A673 (cell line): ENCODE measurements at regions of chr7 and their contacts with region 1.

Region 1: DNA sequence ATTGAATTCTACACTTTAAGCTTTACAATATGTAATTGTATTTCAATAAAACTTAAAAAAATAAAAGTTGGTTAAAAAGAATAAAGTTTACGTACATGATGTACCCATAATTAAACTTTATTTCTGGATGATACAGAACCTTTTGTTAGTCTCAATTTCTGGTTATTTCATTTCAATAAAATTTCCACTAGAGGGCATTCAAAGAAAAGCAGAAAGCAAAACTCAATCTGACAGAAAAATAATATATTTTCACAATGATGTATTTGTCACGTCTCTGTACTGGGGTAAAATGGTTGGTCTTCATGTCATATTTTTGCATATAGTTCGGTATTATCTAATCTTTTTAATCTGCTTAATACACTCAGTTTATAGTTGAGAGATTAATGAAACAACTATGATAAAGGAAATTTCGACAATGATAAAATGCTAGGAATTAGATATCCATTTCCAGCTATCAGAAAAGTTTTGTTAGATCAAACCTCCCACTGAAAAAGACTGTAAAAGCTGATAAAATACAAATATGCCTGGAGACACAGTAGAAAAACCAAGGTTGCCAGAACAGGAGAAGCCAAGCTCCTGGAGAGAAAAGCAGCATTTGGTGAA is 27.4 kb downstream of the ASZ1 start:
- DNase-seq: peak; percentile 19
- H3K4me3 ChIP-seq: no peak overlapping the region
- H3K27ac ChIP-seq: no peak overlapping the region
- H3K4me1 ChIP-seq: no peaks in the 10 kb centered on the region
- H3K27me3 ChIP-seq: no peaks in the 10 kb centered on the region
- CTCF ChIP-seq: peak; percentile 68

Region 2: GRCh38 chr7:117210397-117210796 is 189.5 kb before region 1 on chr7:
- CTCF ChIA-PET with region 1: no interaction called
- POLR2A ChIA-PET with region 1: no interaction called
- intact Hi-C with region 1: no loop called
- DNase-seq: no peak
- H3K4me3 ChIP-seq: no peak overlapping the region
- H3K27ac ChIP-seq: no peak overlapping the region
- H3K4me1 ChIP-seq: peaks cover 7% of the 10 kb centered on the region
- H3K27me3 ChIP-seq: no peaks in the 10 kb centered on the region
- CTCF ChIP-seq: no peak

Region 3: GRCh38 chr7:117673839-117674238 is 273.9 kb after region 1 on chr7:
- CTCF ChIA-PET with region 1: no interaction called
- POLR2A ChIA-PET with region 1: no interaction called
- intact Hi-C with region 1: loop called (anchors 5 kb)
- DNase-seq: peak; percentile 56
- H3K4me3 ChIP-seq: no peak overlapping the region
- H3K27ac ChIP-seq: no peak overlapping the region
- H3K4me1 ChIP-seq: no peaks in the 10 kb centered on the region
- H3K27me3 ChIP-seq: no peaks in the 10 kb centered on the region
- CTCF ChIP-seq: peak; percentile 64

Region 4: DNA sequence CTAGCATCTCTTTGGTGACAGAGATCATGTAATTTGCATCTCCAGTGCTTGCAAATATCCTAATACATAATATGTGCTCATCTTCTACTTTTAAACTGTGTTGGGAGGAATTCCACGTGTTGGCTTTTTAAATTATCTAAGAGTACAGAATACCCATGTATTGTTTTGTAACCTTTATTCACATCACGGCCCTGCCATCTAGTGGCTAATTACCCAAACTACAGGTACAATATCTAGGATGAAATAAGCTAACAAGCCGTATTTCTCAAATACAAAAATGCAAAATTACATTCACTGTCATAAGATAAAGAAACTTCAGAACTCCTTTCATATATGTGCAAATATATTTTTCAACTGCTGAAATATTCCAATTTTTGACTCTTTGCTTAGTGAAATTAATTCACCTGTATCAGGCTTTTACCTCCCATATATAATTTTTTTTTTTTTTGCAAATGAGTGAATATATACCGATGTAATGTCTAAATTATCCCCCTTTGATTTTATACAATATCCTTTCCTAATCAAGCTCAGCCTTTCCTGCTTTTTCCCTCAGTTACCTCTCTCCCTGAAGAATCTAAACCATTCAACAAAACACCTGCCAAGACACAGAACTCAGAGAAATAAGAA is 753.7 kb after region 1 on chr7:
- CTCF ChIA-PET with region 1: interaction called, 3 read pairs
- POLR2A ChIA-PET with region 1: no interaction called
- intact Hi-C with region 1: loop called (anchors 2 kb)
- DNase-seq: peak; percentile 77
- H3K4me3 ChIP-seq: no peak overlapping the region
- H3K27ac ChIP-seq: no peak overlapping the region
- H3K4me1 ChIP-seq: peaks cover 15% of the 10 kb centered on the region
- H3K27me3 ChIP-seq: no peaks in the 10 kb centered on the region
- CTCF ChIP-seq: peak; percentile 79

Region 5: GRCh38 chr7:118250860-118251494 is 851.1 kb after region 1 on chr7:
- CTCF ChIA-PET with region 1: no interaction called
- POLR2A ChIA-PET with region 1: no interaction called
- intact Hi-C with region 1: loop called (anchors 5 kb)
- DNase-seq: peak; percentile 23
- H3K4me3 ChIP-seq: no peak overlapping the region
- H3K27ac ChIP-seq: no peak overlapping the region
- H3K4me1 ChIP-seq: no peaks in the 10 kb centered on the region
- H3K27me3 ChIP-seq: no peaks in the 10 kb centered on the region
- CTCF ChIP-seq: peak; percentile 66